CD8-positive, alpha-beta memory T cell (primary cell): ENCODE measurements at regions of chr22 and their contacts with region 1.

Region 1: DNA sequence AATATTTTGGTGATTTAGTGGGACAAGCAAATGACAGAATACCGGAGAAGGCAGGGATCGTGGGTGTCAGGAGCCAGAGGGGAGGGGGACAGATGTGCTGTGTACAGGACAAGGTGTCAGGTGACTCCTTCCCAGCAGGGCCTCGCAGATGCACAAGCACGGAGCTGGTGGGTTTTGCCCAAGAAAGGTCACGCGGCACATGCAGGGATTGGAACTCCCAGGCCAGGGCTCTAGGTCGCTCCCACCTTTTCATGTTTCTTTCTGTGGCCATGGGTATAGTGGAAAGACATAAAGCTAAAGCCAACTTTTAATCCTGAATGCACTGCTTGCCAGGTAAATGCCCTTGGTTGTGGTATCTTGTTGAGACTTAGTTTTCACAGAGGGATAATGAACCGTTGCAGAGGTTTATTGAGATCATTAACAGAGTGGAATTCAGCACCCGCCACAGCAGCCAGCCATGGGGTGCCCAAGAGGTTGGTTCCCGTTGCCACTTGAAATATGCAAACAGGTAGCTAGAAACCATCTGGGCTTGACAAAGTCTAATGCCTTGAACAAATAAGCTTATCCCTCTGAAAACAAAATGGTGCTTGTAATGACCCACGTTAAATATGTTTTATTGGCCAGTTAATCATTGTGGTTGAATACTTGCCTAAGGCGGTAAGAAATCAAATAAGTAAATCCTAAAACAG is 10.1 kb downstream of the C22orf23 start:
- DNase-seq: no peak
- H3K4me3 ChIP-seq: no peak overlapping the region
- H3K4me3 Mint-ChIP-seq: no peak overlapping the region
- H3K27ac ChIP-seq: no peak overlapping the region
- H3K27ac Mint-ChIP-seq: peak overlapping the region in 2 of 8 donors; percentile 46 to 55
- H3K4me1 ChIP-seq: no peaks in the 10 kb centered on the region
- H3K4me1 Mint-ChIP-seq: no peaks in the 10 kb centered on the region
- H3K27me3 ChIP-seq: no peaks in the 10 kb centered on the region
- H3K27me3 Mint-ChIP-seq: peaks cover 0 to 1% of the 10 kb centered on the region in 2 donors

Region 2: GRCh38 chr22:37581504-37581903 is 361.8 kb before region 1 on chr22:
- CTCF ChIA-PET with region 1: no interaction called
- POLR2A ChIA-PET with region 1: interaction called, 11 read pairs
- DNase-seq: no peak
- H3K4me3 ChIP-seq: no peak overlapping the region
- H3K4me3 Mint-ChIP-seq: no peak overlapping the region
- H3K27ac ChIP-seq: no peak overlapping the region
- H3K27ac Mint-ChIP-seq: no peak overlapping the region
- H3K4me1 ChIP-seq: peaks cover 13% of the 10 kb centered on the region
- H3K4me1 Mint-ChIP-seq: peaks cover 5 to 19% (median 10%) of the 10 kb centered on the region in 3 donors
- H3K27me3 ChIP-seq: no peaks in the 10 kb centered on the region
- H3K27me3 Mint-ChIP-seq: peaks cover 15 to 17% of the 10 kb centered on the region in 2 donors

Region 3: GRCh38 chr22:37965940-37966664 is 22.8 kb after region 1 on chr22:
- CTCF ChIA-PET with region 1: no interaction called
- POLR2A ChIA-PET with region 1: no interaction called
- DNase-seq: no peak
- H3K4me3 ChIP-seq: no peak overlapping the region
- H3K4me3 Mint-ChIP-seq: no peak overlapping the region
- H3K27ac ChIP-seq: no peak overlapping the region
- H3K27ac Mint-ChIP-seq: peak overlapping the region in 1 of 8 donors; percentile 87
- H3K4me1 ChIP-seq: no peaks in the 10 kb centered on the region
- H3K4me1 Mint-ChIP-seq: peaks cover 6 to 14% (median 9%) of the 10 kb centered on the region in 3 donors
- H3K27me3 ChIP-seq: no peaks in the 10 kb centered on the region
- H3K27me3 Mint-ChIP-seq: peaks cover 0 to 2% of the 10 kb centered on the region in 2 donors